Activated T-helper 2 cell treated with anti-CD3 and anti-CD28 coated beads, Interferon-gamma antibody, Interleukin-2, Interleukin-4, amounts not matched to agents 10 μg/mL and 5 μg/mL and 100 μg/mL, durations not matched to agents 14 hours and 24 hours and 36 hours (primary cell): ENCODE measurements at regions of chr11 and their contacts with region 1.

Region 1: DNA sequence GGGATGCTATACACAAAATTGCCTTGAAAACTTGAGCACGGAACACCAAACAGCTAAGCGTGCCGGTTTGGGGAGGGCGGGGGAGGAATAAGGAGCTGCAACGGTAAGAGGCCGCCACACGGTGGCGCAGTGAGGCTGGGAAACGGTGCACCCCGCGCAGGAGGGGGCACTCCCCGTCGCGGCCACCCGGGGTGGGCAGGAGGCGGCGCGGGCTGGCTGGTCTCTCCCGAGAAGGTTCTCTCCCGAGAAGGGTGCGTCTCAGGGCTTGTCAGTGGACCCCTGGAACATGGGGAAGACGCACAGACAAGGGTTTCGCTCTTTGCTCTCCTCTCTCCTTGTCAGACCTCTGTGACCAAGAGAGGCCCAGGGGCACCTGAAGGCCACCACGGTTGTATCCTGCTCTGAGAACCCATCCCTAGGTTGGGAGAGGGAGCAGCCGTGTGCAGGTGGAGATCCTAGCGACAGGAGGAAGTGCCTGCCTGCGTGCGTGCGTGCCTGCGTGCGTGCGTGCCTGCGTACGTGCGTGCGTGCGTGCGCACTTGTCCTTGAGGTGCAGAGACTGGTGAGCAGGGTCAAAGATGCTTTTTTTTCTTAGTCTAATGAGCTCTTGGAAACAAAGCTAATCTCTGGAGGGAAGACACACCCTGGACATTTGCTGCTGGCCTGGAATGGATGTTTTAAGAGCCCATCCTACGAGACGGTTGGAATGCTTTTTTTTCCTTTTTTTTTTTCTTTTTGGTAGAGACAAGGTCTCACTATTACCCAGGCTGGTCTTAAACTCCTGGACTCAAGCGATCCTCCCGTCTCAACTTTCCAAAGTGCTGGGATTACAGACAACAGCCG is 18.1 kb upstream of the JAM3 start:
- DNase-seq: peak; percentile 66
- H3K4me3 Mint-ChIP-seq: no peak overlapping the region
- H3K27ac Mint-ChIP-seq: no peak overlapping the region
- H3K4me1 Mint-ChIP-seq: peaks cover 11% of the 10 kb centered on the region
- H3K27me3 Mint-ChIP-seq: peaks cover 18% of the 10 kb centered on the region

Region 2: GRCh38 chr11:134062265-134063123 is 11.7 kb after region 1 on chr11:
- intact Hi-C with region 1: no loop called
- DNase-seq: no peak
- H3K4me3 Mint-ChIP-seq: no peak overlapping the region
- H3K27ac Mint-ChIP-seq: no peak overlapping the region
- H3K4me1 Mint-ChIP-seq: peaks cover 25% of the 10 kb centered on the region
- H3K27me3 Mint-ChIP-seq: peaks cover 42% of the 10 kb centered on the region

Region 3: GRCh38 chr11:134086376-134086775 is 35.6 kb after region 1 on chr11:
- intact Hi-C with region 1: no loop called
- DNase-seq: no peak
- H3K4me3 Mint-ChIP-seq: no peak overlapping the region
- H3K27ac Mint-ChIP-seq: no peak overlapping the region
- H3K4me1 Mint-ChIP-seq: no peaks in the 10 kb centered on the region
- H3K27me3 Mint-ChIP-seq: peaks cover 9% of the 10 kb centered on the region

Region 4: GRCh38 chr11:134098566-134099184 is 47.9 kb after region 1 on chr11:
- intact Hi-C with region 1: loop called (anchors 2 kb)
- DNase-seq: no peak
- H3K4me3 Mint-ChIP-seq: no peak overlapping the region
- H3K27ac Mint-ChIP-seq: no peak overlapping the region
- H3K4me1 Mint-ChIP-seq: peaks cover 4% of the 10 kb centered on the region
- H3K27me3 Mint-ChIP-seq: peaks cover 2% of the 10 kb centered on the region

Region 5: GRCh38 chr11:134139873-134140331 is 89.1 kb after region 1 on chr11:
- intact Hi-C with region 1: loop called (anchors 1 kb)
- DNase-seq: peak; percentile 27
- H3K4me3 Mint-ChIP-seq: no peak overlapping the region
- H3K27ac Mint-ChIP-seq: no peak overlapping the region
- H3K4me1 Mint-ChIP-seq: peaks cover 13% of the 10 kb centered on the region
- H3K27me3 Mint-ChIP-seq: no peaks in the 10 kb centered on the region